ENCODE measurements at regions of chr2 and their contacts with region 1.

Region 1: DNA sequence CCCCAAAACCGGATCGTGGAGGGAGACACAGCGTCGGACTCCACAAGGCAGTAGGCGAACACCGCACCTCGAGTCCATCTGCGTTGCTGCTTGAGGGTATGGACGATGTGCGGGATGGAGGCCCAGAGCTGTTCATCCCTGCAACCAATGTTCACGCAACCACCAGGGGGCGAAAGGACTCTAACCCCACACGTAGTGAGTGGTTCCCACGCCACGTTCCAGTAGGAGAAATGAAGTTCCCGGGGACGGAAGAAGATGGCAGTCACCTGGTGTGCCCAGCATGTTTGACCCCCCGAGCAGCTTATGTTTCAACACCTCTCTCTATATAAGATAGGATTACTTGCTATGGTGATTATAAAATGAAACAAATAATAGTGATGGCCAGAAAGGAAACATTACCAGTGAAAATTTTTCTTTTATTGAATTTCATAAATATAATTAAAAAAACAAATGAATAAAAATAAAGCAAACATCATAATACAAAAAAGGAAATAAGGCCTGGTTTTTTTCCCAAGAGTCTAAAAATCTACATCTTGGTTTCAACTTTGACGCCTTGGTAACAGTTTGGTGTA is 184.3 kb downstream of the SH3BP4 start:
- DNase-seq: peak; percentile 86
- H3K4me3 ChIP-seq: no peak overlapping the region
- H3K27ac ChIP-seq: no peak overlapping the region
- H3K4me1 ChIP-seq: peaks cover 0 to 1% (median 0%) of the 10 kb centered on the region in 4 donors
- H3K27me3 ChIP-seq: no peaks in the 10 kb centered on the region
- CTCF ChIP-seq: peak; percentile 70 to 90 (median 75)
- EP300 ChIP-seq: no peak
- POLR2A ChIP-seq: no peak

Region 2: GRCh38 chr2:235116885-235117492 is 19.1 kb before region 1 on chr2:
- in situ Hi-C with region 1: no loop called
- intact Hi-C with region 1: no loop called
- DNase-seq: no peak
- H3K4me3 ChIP-seq: no peak overlapping the region
- H3K27ac ChIP-seq: no peak overlapping the region
- H3K4me1 ChIP-seq: peaks cover 0 to 4% (median 0%) of the 10 kb centered on the region in 4 donors
- H3K27me3 ChIP-seq: peaks cover 4% of the 10 kb centered on the region
- CTCF ChIP-seq: peak; percentile 52 to 76 (median 65)
- EP300 ChIP-seq: no peak
- POLR2A ChIP-seq: no peak

Region 3: DNA sequence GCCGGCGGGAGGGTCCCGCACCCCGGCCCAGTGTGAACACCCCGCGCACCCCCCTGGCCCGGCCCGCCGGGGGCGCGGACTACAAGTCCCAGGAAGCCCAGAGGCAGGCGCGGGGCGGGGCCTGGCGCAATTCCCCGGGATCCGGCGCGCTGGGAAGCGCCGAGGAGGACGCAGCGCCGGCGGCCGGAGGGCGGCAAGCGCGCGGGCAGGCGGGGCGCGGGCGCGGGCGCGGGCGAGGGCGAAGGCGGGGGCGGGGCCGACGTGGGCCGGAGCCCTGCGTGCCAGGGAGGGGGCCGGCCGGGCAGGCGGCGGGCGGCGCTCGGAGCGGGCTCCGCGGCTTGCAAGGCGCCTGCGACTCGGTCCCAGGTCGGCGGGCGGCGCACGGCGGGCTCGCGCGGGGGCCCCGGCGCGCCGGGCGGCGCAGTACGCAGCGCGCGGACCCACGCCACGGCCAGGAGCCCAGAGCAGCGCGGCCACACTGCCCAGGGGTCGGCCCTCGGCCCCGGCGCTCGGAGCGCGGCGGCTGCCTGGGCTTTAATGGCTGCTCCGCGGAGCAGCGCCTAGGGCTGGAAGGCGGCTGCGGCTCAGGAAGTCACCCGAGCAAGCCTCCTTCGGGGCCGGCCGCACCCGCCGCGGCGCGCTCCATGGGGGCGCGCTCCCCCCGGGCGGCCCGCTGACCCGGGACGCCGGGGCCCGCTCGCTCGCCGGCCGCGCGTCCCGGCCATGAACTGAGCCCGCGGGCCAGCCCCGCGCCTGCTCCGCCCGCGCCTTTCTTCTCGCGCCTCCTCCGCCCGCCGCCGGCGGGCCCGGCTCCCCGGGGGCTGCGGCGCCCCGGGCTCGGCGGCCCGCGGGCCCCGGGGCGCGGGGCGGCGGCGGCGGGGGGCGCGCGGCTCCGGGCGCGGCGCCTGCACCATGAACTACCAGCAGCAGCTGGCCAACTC is 358.0 kb after region 1 on chr2 and contains the start of gene AGAP1:
- in situ Hi-C with region 1: loop called in 1 of 4 experiments (anchors 25 kb)
- intact Hi-C with region 1: no loop called
- DNase-seq: peak; percentile 91
- H3K4me3 ChIP-seq: peak within 1 kb of the TSS; percentile 71 to 81 (median 76)
- H3K27ac ChIP-seq: peak within 1 kb of the TSS; percentile 84 to 90 (median 89)
- H3K4me1 ChIP-seq: peaks cover 5 to 33% (median 28%) of the 10 kb centered on the region in 4 donors
- H3K27me3 ChIP-seq: no peaks in the 10 kb centered on the region
- CTCF ChIP-seq: no peak
- EP300 ChIP-seq: no peak
- POLR2A ChIP-seq: no peak
- total RNA-seq, gene AGAP1: 56.1 to 96.9 (median 71.2) TPM

Region 4: DNA sequence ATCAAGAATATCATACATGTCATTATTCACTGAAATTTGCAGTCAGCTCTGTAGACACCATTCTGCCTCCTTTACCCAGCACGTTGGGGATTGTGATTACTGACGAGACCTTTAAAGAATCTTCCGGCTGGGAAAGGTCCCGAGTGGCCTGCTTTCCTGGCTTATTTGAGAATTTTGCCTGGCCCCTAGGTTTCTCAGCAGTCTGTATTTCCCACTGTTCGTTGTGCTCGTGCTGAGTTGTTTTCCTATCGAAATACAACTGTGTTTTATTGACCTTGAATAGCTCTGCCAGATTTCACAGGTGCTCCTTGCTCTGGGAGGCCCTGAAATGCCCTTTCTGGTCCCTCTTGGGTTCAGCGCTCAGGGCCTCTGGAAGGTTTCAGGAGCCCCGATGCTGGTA is 452.7 kb after region 1 on chr2:
- in situ Hi-C with region 1: loop called (anchors 5 to 10 kb)
- intact Hi-C with region 1: loop called (anchors 5 kb)
- DNase-seq: no peak
- H3K4me3 ChIP-seq: no peak overlapping the region
- H3K27ac ChIP-seq: no peak overlapping the region
- H3K4me1 ChIP-seq: peaks cover 0 to 9% (median 4%) of the 10 kb centered on the region in 4 donors
- H3K27me3 ChIP-seq: no peaks in the 10 kb centered on the region
- CTCF ChIP-seq: no peak
- EP300 ChIP-seq: no peak
- POLR2A ChIP-seq: no peak

Region 5: DNA sequence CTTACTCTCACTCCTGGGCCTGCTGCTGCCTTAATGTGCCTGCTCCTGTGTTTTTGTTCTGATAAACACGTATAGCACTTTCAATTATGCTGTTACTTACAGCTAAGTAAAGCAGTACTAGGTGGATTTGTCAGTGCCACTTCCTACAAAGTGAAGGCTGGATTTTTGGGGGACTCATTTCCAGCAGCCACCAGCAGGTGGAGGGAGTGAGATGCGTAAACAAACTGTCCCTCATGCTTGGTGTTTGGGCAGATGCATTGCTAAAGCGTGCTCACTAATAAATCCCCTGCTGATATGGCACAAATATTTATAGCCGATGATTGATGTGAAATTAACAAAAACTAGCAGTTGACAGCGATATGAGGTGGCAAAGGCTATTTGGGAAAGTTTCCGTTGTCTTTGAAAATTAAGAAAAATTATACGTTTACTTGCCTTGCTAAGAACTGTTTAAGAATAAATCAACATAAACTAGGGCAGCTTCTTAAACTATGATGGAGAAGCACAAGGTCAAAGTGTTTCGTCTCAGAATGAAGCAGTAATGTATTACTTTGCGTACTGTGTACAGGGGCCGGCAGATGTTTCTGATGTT is 459.4 kb after region 1 on chr2:
- in situ Hi-C with region 1: loop called in 2 of 4 experiments (anchors 5 to 10 kb)
- intact Hi-C with region 1: loop called (anchors 5 kb)
- DNase-seq: peak; percentile 76
- H3K4me3 ChIP-seq: no peak overlapping the region
- H3K27ac ChIP-seq: no peak overlapping the region
- H3K4me1 ChIP-seq: peaks cover 0 to 22% (median 4%) of the 10 kb centered on the region in 4 donors
- H3K27me3 ChIP-seq: no peaks in the 10 kb centered on the region
- CTCF ChIP-seq: peak; percentile 77 to 92 (median 83)
- EP300 ChIP-seq: no peak
- POLR2A ChIP-seq: no peak

Region 6: GRCh38 chr2:235709124-235709813 is 573.2 kb after region 1 on chr2:
- in situ Hi-C with region 1: loop called in 1 of 4 experiments (anchors 25 kb)
- intact Hi-C with region 1: no loop called
- DNase-seq: peak; percentile 89
- H3K4me3 ChIP-seq: no peak overlapping the region
- H3K27ac ChIP-seq: peak overlapping the region; percentile 54 to 84 (median 78)
- H3K4me1 ChIP-seq: peaks cover 4 to 23% (median 14%) of the 10 kb centered on the region in 4 donors
- H3K27me3 ChIP-seq: no peaks in the 10 kb centered on the region
- CTCF ChIP-seq: no peak
- EP300 ChIP-seq: peak; percentile 27
- POLR2A ChIP-seq: peak; percentile 80

Region 7: DNA sequence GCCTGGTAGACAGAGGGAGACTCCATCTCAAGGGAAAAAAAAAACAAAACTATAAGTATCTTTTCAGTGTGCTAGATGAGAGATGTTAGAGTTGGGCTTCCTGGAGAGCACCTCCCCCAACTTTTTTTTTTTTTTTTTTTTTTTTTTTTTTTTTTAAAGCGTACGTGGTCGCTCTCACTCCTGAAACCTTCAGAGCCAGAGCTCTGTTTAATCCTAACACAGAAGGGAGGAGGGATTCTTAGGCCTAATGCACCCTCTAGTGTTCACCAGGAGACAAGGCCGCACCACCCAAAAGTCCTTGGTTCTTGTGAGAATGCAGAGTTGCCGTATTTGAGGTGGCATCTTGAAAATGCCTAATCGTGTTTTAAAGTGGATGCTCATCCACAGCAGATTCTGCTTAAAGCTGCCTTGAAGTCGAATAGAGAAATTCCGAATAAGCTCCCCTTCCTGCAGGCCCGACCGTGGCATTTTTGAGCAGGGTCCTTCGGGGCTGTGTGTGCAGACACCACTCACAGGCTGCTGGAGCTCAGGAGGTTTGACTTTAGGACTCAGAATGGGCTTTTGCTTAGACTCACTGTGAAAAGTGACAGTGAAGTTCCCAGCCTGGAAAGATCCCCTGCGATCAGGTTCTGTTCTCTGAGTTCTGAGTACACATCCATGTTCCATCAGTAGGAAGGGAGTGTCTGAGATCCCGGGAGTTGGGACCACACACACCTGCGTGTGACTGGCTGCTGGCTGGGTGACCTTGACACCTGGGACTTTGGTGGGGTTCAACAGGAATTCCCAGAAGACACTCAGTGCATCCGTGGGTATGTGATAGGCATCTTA is 610.4 kb after region 1 on chr2:
- in situ Hi-C with region 1: loop called in 3 of 4 experiments (anchors 10 kb)
- intact Hi-C with region 1: loop called (anchors 5 kb)
- DNase-seq: peak; percentile 68
- H3K4me3 ChIP-seq: no peak overlapping the region
- H3K27ac ChIP-seq: peak overlapping the region in 1 of 4 donors; percentile 51
- H3K4me1 ChIP-seq: peaks cover 0 to 10% (median 3%) of the 10 kb centered on the region in 4 donors
- H3K27me3 ChIP-seq: no peaks in the 10 kb centered on the region
- CTCF ChIP-seq: peak; percentile 71 to 79 (median 76)
- EP300 ChIP-seq: no peak
- POLR2A ChIP-seq: no peak

Measured in transverse colon (tissue), 4 donors.